ENCODE measurements at regions of chr6 and their contacts with region 1.

Region 1: GRCh38 chr6:161549977-161550655 is 276.3 kb upstream of the AGPAT4 start:
- DNase-seq: no peak
- H3K4me3 ChIP-seq: no peak overlapping the region
- H3K27ac ChIP-seq: no peak overlapping the region
- H3K4me1 ChIP-seq: no peaks in the 10 kb centered on the region
- H3K27me3 ChIP-seq: no peaks in the 10 kb centered on the region
- CTCF ChIP-seq: no peak
- POLR2A ChIP-seq: no peak

Region 2: DNA sequence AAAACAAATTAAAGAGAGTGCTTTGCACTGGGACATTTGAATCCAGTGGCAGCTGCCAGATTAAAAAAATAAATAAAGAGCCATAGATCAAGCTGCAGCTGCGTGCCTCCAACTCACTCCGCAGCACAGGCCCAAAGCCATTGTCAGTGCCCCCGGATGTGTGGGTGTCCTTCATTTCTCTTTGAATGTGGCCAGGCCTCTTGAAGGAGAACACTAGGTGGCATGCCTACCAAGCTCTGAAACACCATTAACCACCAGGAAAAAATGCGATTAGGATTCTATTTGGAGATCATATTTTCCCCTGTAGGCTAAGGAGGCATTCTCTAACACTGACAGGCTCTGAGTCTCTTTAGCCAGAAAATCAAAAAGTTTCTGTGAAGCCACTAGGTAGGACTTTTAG is 627.6 kb after region 1 on chr6:
- intact Hi-C with region 1: loop called (anchors 5 kb)
- DNase-seq: no peak
- H3K4me3 ChIP-seq: no peak overlapping the region
- H3K27ac ChIP-seq: no peak overlapping the region
- H3K4me1 ChIP-seq: no peaks in the 10 kb centered on the region
- H3K27me3 ChIP-seq: no peaks in the 10 kb centered on the region
- CTCF ChIP-seq: no peak
- POLR2A ChIP-seq: no peak

Region 3: GRCh38 chr6:162385980-162386379 is 835.9 kb after region 1 on chr6:
- intact Hi-C with region 1: no loop called
- DNase-seq: no peak
- H3K4me3 ChIP-seq: no peak overlapping the region
- H3K27ac ChIP-seq: no peak overlapping the region
- H3K4me1 ChIP-seq: no peaks in the 10 kb centered on the region
- H3K27me3 ChIP-seq: no peaks in the 10 kb centered on the region
- CTCF ChIP-seq: no peak
- POLR2A ChIP-seq: no peak